Common myeloid progenitor, CD34-positive (primary cell): ENCODE measurements at regions of chr17 and their contacts with region 1.

Region 1: DNA sequence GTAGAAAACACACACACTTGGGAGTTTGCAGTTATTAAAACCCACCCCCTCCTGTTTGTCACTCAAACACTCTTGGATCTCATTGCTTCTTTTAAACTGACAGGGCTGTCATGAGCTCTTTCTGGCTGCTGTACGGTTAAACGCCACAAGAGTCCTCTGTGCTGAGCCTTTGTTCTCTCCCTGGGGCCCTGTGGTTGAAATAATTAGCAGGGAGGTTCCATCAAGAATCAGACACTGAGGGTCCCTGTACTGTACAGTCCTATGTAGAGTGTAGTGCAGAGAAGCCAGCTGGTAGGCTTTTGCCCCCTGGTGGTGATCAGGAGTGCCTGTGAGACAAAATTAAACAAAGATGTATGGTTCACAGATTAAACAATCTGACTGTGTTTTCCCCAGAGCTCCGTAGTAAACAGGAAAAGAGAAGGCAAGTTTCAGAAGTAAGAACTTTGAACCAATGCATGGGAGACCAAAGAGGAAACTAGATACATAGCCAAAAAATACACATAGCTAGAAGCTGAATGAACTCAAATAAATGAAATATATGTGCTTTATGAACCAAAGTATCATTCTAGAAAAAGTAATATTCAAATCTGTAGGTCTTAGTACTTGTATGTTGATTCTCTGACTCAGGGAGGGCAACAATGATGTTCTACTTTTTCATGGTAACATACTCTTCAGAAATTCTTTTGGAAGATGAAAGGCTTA is 1.4 kb upstream of the SSH2 start:
- DNase-seq: peak; percentile 91 to 96 (median 95)
- H3K4me3 ChIP-seq: peak overlapping the region in 6 of 7 experiments; percentile 83 to 98 (median 94)
- H3K27ac ChIP-seq: no peak overlapping the region
- H3K4me1 ChIP-seq: peaks cover 14 to 44% (median 26%) of the 10 kb centered on the region in 4 experiments
- H3K27me3 ChIP-seq: no peaks in the 10 kb centered on the region

Region 2: GRCh38 chr17:29807520-29808351 is 123.6 kb before region 1 on chr17:
- CTCF ChIA-PET with region 1: interaction called, 163 read pairs
- POLR2A ChIA-PET with region 1: interaction called, 3 read pairs
- DNase-seq: peak; percentile 65 to 82 (median 78)
- H3K4me3 ChIP-seq: no peak overlapping the region
- H3K27ac ChIP-seq: no peak overlapping the region
- H3K4me1 ChIP-seq: peaks cover 0 to 7% (median 3%) of the 10 kb centered on the region in 4 experiments
- H3K27me3 ChIP-seq: no peaks in the 10 kb centered on the region

Region 3: DNA sequence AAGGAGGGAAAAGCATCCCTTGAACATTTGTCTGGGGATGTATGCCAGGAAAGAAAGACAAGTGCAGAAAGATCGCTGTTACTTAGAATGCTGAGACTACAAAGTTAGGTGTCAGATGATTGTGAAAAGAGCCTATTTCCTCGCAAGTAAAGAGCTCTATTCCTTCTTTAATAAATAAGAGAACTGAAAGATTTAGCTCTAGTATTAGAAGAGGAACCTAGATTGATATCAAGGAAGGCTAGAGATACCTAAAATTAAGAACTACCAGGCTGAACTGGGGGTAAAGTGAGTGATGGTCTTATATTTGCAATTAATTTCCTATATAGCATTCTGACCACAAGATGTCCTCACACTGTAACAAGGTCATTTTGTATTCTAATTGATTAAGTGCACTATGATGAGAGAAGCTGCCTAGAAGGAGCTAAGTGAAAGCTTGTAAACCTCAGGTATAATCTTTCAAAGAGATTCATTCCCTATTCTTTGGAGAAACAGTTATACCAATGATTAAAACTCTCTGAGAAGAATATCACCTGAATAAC is 63.7 kb before region 1 on chr17:
- CTCF ChIA-PET with region 1: interaction called, 13 read pairs
- POLR2A ChIA-PET with region 1: no interaction called
- DNase-seq: peak in 1 of 3 donors; percentile 4
- H3K4me3 ChIP-seq: no peak overlapping the region
- H3K27ac ChIP-seq: no peak overlapping the region
- H3K4me1 ChIP-seq: peaks cover 0 to 4% (median 0%) of the 10 kb centered on the region in 4 experiments
- H3K27me3 ChIP-seq: no peaks in the 10 kb centered on the region

Region 4: DNA sequence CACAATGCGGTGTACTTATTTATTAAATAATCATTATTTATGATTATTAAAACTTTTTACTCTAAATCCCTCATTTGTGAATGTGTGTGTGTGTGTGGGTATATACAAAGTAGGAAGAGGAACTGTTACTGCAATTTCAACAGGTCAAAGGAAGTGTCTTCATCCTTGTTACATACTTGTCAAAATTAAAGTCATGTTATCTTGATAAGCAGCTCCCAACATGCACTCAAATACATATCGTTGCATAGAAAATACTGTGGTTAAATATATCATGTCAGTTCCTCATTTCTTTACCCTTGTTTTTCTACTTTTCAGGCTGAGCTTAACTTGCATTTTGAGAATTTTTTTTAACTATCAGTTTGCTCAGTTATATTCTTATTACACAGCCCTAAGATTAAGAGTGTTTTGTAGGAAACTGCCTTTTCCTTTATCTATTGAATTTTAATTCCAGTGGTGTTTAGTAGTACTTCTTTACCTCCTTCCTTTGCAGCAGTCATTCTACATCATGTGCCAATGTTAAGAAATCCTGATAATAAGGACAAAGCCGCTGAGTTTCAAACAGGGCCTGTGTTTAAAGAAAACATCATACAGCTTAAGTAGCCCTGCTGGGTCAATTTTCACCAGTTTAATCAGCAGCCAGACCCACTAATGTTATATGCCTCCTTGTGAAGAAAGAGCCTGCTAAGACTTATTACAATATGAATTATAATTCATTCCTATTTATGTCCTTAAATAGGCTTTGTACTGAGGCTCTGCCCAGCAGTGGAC is 17.2 kb after region 1 on chr17:
- CTCF ChIA-PET with region 1: interaction called, 14 read pairs
- POLR2A ChIA-PET with region 1: interaction called, 3 read pairs
- DNase-seq: peak; percentile 43 to 93 (median 85)
- H3K4me3 ChIP-seq: peak overlapping the region in 1 of 7 experiments; percentile 5
- H3K27ac ChIP-seq: peak overlapping the region in 1 of 2 experiments; percentile 74
- H3K4me1 ChIP-seq: peaks cover 12 to 21% (median 15%) of the 10 kb centered on the region in 4 experiments
- H3K27me3 ChIP-seq: no peaks in the 10 kb centered on the region